ENCODE measurements at regions of chr19 and their contacts with region 1.

Region 1: DNA sequence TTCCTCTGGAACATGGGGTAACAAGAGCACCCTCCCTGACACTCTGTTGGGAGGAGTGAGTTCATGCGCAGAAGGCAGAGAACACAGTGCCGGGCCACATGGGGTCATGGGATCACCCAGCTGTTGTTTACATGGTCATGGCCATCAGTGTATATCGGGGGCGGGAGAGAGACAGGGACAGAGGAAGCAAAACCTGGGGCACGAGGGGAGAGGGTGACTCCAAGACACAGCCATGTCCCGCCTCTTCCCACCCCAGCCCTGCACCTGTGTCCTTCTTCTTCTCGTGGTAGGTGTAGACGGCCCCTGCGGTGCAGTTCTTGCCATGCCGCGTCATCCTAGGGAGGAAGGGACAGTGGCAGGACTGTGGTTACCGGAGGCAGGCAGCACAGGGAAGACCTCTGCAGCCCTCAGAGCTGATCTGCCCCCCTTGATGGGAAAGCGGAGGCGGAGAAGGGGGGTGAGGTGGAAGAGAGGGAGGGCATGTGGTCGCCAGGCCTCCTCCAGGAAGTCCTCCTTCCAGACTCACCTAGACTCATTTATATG is 19.9 kb downstream of the NOSIP start:
- DNase-seq: no peak
- H3K4me3 ChIP-seq: no peak overlapping the region
- H3K27ac ChIP-seq: no peak overlapping the region
- H3K4me1 ChIP-seq: no peaks in the 10 kb centered on the region
- H3K27me3 ChIP-seq: no peaks in the 10 kb centered on the region
- CTCF ChIP-seq: no peak

Region 2: GRCh38 chr19:49850473-49851342 is 290.3 kb after region 1 on chr19 and contains the start of gene PTOV1:
- CTCF ChIA-PET with region 1: interaction called, 11 read pairs
- POLR2A ChIA-PET with region 1: no interaction called
- intact Hi-C with region 1: no loop called
- DNase-seq: peak; percentile 76 to 92
- H3K4me3 ChIP-seq: peak within 1 kb of the TSS; percentile 99
- H3K27ac ChIP-seq: peak within 1 kb of the TSS; percentile 90
- H3K4me1 ChIP-seq: peaks cover 37% of the 10 kb centered on the region
- H3K27me3 ChIP-seq: no peaks in the 10 kb centered on the region
- CTCF ChIP-seq: no peak
- total RNA-seq, gene PTOV1: 151 and 155 TPM in 2 replicates